Left colon (tissue), 2 donors: ENCODE measurements at regions of chr6 and their contacts with region 1.

Region 1: DNA sequence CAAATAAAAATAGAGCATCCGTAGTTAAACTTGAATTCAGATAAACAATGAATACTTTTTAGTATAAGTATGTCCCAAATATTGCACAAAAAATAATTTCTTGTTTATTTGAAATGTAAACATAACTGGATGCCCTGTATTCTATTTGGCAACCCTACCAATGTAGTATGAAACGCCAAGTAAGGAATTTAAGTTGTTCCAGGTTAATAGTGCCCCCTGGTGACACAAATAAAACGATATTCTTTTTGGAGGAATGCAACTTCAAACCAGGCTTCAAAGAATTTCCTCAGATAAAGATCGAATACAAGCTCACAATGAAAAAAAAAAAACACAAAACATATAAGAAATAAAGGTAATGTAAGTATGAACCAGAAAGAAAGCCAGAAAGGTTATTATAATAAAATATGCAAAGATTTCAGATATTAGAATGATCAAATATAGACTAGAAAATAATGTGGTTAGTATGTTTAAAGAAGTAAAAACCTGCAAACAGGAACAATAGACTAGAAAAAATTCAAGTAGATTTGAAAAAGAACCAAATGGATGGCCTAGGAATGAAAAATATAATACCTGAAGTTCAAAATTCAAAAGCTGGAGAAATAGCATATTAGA is 18.4 kb upstream of the AKAP7 start:
- DNase-seq: no peak
- ATAC-seq: peak; percentile 77

Region 2: DNA sequence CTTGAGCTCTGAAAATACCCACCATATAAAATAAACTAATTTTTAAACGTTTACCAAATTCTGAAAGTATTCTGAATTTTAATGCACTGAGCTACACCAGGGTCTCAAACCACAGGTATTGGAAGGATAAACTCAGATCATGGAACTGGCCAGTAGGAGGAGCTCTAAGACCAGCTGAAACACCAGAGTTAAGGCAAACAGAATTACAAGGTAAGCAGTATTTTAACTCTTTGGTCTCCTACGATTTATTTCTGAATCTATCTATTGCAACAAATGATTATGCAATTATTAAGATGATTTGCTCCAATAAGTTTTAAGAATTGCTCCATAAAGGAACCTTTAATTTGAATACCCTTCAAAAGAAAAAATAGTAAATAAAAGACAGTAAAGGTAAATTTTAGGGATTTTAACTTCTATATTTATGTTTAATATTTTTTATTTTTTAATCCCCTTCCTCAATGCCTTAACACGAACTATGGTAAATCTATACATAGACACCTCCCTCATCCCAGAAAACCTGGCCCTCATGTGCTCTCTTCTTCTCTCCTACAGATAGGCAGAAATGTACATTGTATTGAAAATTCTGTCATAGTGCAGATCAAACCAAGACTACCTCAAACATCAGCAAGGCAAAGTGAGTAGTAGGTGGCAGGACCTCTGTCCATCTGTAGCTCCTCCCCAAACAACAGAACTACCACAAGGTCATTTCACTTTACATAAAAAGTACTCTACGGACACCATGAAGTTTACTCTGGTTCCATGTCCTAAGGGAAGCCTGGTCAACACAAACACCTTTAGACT is 231.3 kb before region 1 on chr6:
- intact Hi-C with region 1: loop called (anchors 2 to 5 kb)
- DNase-seq: peak; percentile 32 to 73
- ATAC-seq: peak; percentile 86